ENCODE measurements at regions of chr3 and their contacts with region 1.

Region 1: GRCh38 chr3:49171119-49171774 is at the start of gene KLHDC8B:
- DNase-seq: peak; percentile 90
- H3K4me3 Mint-ChIP-seq: peak within 1 kb of the TSS; percentile 77
- H3K27ac Mint-ChIP-seq: no peak within 1 kb of the TSS
- H3K4me1 Mint-ChIP-seq: no peaks in the 10 kb centered on the region
- H3K27me3 Mint-ChIP-seq: no peaks in the 10 kb centered on the region
- CTCF ChIP-seq: peak; percentile 87
- total RNA-seq, gene KLHDC8B: 5.4 and 7.1 TPM in 2 replicates

Region 2: DNA sequence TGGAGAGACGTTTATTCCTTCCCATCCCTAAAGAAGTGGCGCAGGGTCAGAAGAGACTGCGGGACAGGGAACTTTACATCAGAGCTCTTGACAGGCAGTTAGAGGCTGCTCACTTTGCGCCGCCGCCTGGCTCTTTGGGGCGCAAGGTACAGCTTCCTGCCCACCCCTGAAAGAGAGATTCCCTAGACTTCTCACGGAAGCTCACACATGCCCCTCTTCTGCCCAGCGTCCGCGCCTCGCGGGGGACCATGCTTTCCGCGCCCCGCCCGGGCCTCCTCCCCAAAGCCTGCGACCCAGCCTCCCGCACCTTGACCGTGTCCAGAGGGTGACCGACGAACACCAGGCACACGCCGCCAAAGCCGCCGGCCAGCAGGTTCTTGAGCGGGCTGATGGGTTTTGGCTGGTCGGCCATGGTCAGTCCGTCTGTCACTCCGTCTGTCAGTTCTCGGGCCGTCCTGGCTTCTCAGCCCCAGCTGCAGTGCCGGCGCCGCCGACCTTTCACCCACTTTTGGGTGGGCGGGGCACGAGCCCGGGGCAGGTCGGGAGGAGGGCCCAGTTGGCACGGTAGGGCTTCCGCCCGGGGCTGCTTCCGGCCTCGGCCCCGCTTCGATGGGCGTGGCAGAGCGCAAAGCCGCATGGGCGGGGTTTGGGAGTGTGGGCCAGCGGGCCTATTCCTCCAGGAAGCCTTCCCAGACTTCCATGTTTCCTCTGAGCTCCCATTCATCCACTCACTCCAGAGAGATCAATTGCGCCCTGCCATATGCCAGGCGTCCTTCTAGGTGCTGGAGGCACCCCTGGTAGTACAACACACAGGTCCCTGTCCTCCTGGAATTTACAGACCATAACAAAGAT is 272.6 kb before region 1 on chr3 and contains the start of gene SLC25A20:
- CTCF ChIA-PET with region 1: no interaction called
- intact Hi-C with region 1: no loop called
- DNase-seq: peak; percentile 96
- H3K4me3 Mint-ChIP-seq: peak within 1 kb of the TSS; percentile 90
- H3K27ac Mint-ChIP-seq: peak within 1 kb of the TSS; percentile 68
- H3K4me1 Mint-ChIP-seq: peaks cover 18% of the 10 kb centered on the region
- H3K27me3 Mint-ChIP-seq: no peaks in the 10 kb centered on the region
- CTCF ChIP-seq: no peak
- total RNA-seq, gene SLC25A20: 7.9 and 11.4 TPM in 2 replicates

Region 3: DNA sequence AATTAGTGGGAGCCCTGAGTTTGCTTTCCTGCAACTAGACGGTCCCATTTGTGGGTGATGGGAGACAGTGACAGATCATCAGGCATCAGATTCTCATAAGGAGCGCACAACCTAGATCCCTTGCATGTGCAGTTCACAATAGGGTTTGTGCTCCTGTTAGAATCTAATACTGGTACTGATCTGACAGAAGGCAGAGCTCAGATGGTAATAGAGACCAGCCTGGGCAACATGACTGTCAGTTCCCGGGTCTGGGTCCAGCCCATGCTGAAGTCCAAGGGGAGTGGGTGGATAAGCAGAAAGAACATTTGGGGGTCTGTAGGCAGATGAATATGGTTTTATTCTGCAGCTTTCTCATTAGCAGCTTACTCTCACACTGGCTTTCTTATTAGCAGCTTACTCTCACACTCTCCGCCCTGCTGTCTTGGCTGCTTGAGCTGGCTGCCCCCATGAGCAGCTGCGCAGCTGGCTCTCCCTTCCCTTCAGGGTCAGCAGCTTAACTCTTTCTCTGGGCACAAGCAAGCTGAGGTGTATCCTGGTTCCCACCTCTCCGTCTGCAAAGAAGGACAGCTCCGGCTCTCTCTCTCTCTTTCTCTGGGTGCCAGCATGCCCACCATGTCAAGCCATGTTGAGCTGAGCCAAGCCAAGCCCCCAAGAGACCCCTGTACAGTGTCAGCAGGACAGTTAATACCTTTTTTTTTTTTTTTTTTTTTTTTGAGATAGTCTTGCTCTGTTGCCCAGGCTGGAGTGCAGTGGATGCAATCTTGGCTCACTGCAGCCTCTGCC is 46.6 kb after region 1 on chr3:
- CTCF ChIA-PET with region 1: no interaction called
- intact Hi-C with region 1: no loop called
- DNase-seq: no peak
- H3K4me3 Mint-ChIP-seq: no peak overlapping the region
- H3K27ac Mint-ChIP-seq: peak overlapping the region; percentile 76
- H3K4me1 Mint-ChIP-seq: peaks cover 38% of the 10 kb centered on the region
- H3K27me3 Mint-ChIP-seq: no peaks in the 10 kb centered on the region
- CTCF ChIP-seq: no peak

Region 4: DNA sequence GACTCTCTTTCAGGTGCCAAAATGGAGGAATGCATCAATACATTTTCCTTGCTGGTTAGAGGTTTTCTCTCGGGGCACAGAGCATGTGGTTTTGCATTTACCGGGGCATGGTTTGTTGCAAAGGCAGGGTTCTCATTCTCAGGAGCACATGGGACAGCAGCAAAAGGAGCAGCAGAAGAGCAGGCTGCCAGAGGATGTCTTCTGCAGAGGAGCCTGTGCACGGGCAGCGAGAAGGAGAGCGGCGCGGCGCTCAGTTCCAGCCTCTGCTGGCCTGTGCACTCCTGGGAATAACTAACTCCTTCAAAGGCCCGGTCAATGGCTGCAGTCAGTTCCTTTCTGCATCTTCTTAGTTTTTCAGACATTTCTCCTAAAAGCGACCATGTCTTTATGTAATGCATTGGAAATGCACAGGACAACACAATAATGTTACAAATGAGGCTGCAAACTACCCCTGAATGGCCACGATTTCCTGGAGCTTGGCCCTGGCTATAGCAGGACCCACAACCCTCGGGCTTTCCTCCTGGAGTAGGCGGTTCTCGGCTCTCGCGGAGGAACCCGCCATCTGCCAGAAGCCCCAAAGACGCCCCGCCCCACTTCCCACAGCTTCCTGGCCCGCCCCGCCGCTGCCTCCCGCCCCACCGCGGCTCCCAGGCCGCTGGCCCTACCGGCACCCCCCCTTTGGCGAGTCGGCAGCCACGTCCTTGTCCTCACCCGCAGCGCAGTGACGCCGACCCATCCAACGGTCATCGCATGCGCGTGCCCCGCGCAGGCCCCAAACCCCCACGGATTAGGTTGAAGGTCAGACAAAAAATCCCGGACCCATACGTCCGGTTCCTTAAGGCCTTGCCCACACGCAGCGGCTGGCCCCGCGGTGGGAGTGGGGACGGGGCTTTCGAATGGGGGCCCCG is 105.5 kb after region 1 on chr3 and contains the start of gene C3orf62:
- CTCF ChIA-PET with region 1: no interaction called
- intact Hi-C with region 1: loop called (anchors 5 kb)
- DNase-seq: peak; percentile 71
- H3K4me3 Mint-ChIP-seq: peak within 1 kb of the TSS; percentile 63
- H3K27ac Mint-ChIP-seq: no peak within 1 kb of the TSS
- H3K4me1 Mint-ChIP-seq: peaks cover 9% of the 10 kb centered on the region
- H3K27me3 Mint-ChIP-seq: no peaks in the 10 kb centered on the region
- CTCF ChIP-seq: no peak
- total RNA-seq, gene C3orf62: 6.7 and 8.8 TPM in 2 replicates

Region 5: DNA sequence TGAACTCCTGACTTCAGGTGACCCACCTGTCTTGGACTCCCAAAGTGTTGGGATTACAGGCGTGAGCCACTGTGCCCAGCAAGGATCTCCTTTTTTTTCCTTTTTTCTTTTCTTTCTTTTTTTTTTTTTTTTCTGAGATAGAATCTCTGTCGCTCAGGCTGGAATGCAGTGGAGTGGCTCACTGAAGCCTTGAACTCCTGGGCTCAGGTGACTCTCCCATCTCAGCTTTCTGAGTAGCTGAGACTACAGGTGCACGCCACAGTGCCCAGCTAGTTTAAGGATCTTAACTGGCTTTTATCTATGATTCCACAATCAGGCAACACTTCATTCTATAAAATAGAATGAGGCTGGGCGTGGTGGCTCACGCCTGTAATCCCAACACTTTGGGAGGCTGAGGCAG is 274.1 kb after region 1 on chr3:
- CTCF ChIA-PET with region 1: interaction called, 4 read pairs
- intact Hi-C with region 1: loop called (anchors 10 kb)
- DNase-seq: no peak
- H3K4me3 Mint-ChIP-seq: no peak overlapping the region
- H3K27ac Mint-ChIP-seq: no peak overlapping the region
- H3K4me1 Mint-ChIP-seq: no peaks in the 10 kb centered on the region
- H3K27me3 Mint-ChIP-seq: no peaks in the 10 kb centered on the region
- CTCF ChIP-seq: no peak

Region 6: DNA sequence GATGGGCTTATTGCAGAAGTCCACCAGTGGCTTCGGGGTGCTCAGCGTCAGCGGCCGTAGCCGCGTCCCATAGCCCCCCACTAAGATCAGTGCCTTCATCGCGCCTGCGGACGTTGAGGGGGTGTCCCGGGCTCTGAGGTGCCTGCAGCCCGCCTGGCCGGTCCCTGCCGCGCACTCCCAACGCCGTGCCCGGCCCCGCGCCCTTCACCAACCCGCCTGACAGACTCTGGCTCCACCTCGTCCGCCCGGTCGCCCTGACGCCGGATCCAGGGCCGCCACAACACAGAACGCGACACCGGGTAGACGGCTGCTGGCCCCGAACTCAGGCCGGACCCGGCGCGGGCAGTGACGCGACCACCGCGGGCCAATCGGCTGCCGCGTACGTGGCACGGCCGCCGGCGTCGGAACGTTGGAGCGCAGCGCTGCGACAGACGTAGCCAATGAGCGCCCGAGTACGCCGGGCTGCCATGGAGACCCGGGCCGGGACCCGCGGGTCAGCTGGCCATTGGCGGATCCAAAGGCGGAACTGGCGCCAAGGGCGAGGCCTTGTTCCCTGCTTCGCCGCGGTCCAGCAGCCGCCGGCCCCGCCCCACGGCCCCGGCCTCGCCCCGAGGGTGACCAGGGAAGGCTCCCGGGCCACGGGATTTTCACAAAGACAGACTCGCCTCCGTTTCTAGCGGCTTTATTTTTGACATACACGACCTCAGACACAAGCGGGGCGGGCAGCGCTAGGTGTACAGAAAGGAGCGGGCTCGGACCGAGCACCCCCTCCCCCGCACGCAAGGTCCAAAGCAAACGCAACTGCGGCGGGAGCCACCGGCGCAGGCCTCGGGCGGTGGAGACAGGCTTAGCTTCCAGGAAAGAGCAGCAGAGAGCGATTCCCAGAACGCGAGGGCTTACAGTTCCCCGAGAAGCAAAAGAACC is 552.6 kb after region 1 on chr3 and contains the start of gene GMPPB:
- CTCF ChIA-PET with region 1: no interaction called
- intact Hi-C with region 1: no loop called
- DNase-seq: peak; percentile 97
- H3K4me3 Mint-ChIP-seq: peak within 1 kb of the TSS; percentile 86
- H3K27ac Mint-ChIP-seq: peak within 1 kb of the TSS; percentile 93
- H3K4me1 Mint-ChIP-seq: peaks cover 12% of the 10 kb centered on the region
- H3K27me3 Mint-ChIP-seq: no peaks in the 10 kb centered on the region
- CTCF ChIP-seq: no peak
- total RNA-seq, gene GMPPB: 35.8 and 42.4 TPM in 2 replicates

Measured in Calu3 (cell line).